Upper lobe of right lung (tissue), 1 donor: ENCODE measurements at regions of chr15 and their contacts with region 1.

Region 1: GRCh38 chr15:60358935-60359682 is 38.7 kb downstream of the ANXA2 start:
- DNase-seq: no peak
- ATAC-seq: no peak
- H3K4me3 ChIP-seq: no peak overlapping the region
- H3K27ac ChIP-seq: no peak overlapping the region
- H3K4me1 ChIP-seq: peaks cover 22% of the 10 kb centered on the region
- H3K27me3 ChIP-seq: no peaks in the 10 kb centered on the region
- CTCF ChIP-seq: no peak

Region 2: DNA sequence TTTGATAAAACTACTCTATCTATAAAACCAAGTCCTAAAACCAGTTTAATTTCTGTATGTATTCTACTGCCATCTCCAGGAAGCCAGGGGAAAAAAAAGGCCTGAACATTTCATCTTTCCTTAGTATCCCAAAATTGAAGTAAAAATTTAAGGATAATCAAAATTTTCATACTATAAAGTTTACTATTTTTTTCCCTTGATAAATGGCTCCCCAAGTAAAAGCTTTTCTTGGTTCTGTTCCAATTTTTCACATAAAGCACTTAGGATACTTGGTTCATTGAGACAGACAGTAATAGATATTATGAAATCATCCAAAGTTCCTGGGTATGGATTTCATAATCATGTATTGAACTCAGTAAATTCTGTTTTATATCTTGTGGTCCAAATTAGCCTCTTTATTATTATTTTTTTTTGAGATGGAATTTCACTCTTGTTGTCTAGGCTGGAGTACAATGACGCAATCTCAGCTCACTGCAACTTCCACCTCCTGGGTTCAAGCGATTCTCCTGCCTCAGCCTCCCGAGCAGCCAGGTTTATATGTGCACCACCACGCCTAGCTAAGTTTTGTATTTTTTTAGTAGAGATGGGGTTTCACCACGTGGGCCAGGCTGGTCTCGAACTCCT is 85.3 kb after region 1 on chr15:
- intact Hi-C with region 1: loop called (anchors 10 kb)
- DNase-seq: no peak
- ATAC-seq: no peak
- H3K4me3 ChIP-seq: no peak overlapping the region
- H3K27ac ChIP-seq: no peak overlapping the region
- H3K4me1 ChIP-seq: no peaks in the 10 kb centered on the region
- H3K27me3 ChIP-seq: no peaks in the 10 kb centered on the region
- CTCF ChIP-seq: peak; percentile 66